ENCODE measurements at regions of chr9 and their contacts with region 1.

Region 1: GRCh38 chr9:135077497-135078200 is 9.8 kb upstream of the OLFM1 start:
- DNase-seq: peak in 3 of 10 donors; percentile 15 to 83 (median 80)

Region 2: GRCh38 chr9:134617961-134618832 is 459.5 kb before region 1 on chr9:
- intact Hi-C with region 1: no loop called
- DNase-seq: peak in 7 of 10 donors; percentile 8 to 83 (median 40)

Region 3: DNA sequence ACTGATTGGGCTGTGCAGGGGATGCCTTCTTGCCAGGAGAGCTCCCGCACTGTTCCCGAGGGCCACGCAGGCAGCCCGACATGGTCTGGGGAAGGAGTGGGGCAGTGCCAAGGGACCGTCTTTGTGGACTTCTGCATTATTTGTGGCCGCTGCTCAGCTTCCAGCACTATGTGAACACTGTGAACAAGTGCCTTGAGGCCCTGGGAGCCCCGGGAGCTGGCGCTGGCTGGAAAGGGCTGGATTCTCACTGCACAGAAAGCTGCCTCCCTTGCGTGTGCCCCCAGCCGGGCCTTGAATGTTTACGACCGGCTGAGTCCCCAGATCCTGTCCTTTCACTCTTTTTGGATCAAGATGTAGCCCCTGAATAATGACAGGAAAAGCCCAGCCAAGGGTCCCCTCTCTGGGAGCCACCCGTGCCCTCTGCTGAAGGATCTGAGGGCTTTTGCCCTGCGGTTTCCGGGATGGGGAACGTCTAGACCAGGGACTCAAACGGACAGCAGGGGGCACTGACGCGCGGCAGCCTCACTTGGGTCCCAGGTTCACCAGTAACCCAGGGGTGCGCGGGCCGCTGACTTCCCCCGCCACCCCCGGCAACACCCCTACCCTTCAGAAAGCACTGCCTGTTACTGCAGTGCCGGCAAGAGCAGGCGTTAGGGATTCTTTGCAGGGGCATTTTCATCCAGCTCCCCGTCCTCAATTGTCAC is 295.9 kb before region 1 on chr9:
- intact Hi-C with region 1: loop called (anchors 10 kb)
- DNase-seq: no peak

Measured in posterior cingulate gyrus (tissue), 11 donors.